ENCODE measurements at regions of chr17 and their contacts with region 1.

Region 1: DNA sequence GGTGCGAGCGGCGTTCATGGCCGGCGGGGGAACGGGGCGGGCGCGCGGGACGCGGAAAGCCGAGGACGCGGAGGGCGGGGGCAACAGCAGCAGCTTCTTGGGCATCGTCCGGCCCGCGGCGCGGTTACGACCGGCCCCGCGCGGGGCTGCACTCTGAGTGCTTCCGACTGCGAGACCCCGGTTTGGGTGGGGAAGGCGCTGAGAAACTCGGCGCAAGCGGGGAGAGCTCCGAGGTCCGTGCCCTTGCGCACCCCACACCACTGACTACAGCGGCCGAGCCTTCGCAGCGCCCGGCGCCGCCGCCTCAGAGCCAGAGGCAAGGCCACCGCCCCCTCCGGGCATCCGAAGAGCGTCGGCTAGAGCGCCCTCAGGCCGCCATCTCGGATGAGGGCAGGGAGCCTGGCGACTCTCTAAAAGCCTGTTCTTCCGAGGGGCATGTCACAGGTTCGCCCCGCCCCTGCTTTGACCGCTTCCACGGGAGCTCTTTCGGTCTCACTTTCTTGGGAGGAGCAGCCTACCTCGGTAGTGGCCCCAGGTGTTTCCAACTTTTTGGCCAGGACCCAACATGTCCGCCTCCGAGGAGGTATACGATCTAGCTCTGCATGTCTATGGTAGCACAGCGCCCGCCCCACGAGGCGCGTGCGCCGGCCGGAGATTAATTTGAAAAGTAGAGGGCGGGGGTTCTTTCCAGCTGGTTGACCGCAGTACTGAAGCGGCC is at the start of gene PRPSAP1:
- DNase-seq: peak; percentile 92 to 94
- ATAC-seq: peak; percentile 98
- H3K4me3 ChIP-seq: peak within 1 kb of the TSS; percentile 59 to 80
- H3K27ac ChIP-seq: peak within 1 kb of the TSS in 1 of 2 donors; percentile 41
- H3K4me1 ChIP-seq: no peaks in the 10 kb centered on the region
- H3K27me3 ChIP-seq: peaks cover 0 to 2% of the 10 kb centered on the region in 2 donors
- total RNA-seq, gene PRPSAP1: 47.2 to 64.4 TPM

Region 2: GRCh38 chr17:76385892-76386721 is 32.3 kb after region 1 on chr17:
- intact Hi-C with region 1: loop called in 1 of 2 experiments (anchors 5 kb)
- DNase-seq: peak; percentile 89 to 95
- ATAC-seq: peak; percentile 48
- H3K4me3 ChIP-seq: no peak overlapping the region
- H3K27ac ChIP-seq: no peak overlapping the region
- H3K4me1 ChIP-seq: no peaks in the 10 kb centered on the region
- H3K27me3 ChIP-seq: no peaks in the 10 kb centered on the region

Region 3: GRCh38 chr17:76397687-76398487 is 44.1 kb after region 1 on chr17:
- intact Hi-C with region 1: no loop called
- DNase-seq: peak; percentile 93 to 97
- ATAC-seq: peak; percentile 84
- H3K4me3 ChIP-seq: no peak overlapping the region
- H3K27ac ChIP-seq: no peak overlapping the region
- H3K4me1 ChIP-seq: no peaks in the 10 kb centered on the region
- H3K27me3 ChIP-seq: no peaks in the 10 kb centered on the region